Head of caudate nucleus (tissue), 42 donors: ENCODE measurements at regions of chrX and their contacts with region 1.

Region 1: DNA sequence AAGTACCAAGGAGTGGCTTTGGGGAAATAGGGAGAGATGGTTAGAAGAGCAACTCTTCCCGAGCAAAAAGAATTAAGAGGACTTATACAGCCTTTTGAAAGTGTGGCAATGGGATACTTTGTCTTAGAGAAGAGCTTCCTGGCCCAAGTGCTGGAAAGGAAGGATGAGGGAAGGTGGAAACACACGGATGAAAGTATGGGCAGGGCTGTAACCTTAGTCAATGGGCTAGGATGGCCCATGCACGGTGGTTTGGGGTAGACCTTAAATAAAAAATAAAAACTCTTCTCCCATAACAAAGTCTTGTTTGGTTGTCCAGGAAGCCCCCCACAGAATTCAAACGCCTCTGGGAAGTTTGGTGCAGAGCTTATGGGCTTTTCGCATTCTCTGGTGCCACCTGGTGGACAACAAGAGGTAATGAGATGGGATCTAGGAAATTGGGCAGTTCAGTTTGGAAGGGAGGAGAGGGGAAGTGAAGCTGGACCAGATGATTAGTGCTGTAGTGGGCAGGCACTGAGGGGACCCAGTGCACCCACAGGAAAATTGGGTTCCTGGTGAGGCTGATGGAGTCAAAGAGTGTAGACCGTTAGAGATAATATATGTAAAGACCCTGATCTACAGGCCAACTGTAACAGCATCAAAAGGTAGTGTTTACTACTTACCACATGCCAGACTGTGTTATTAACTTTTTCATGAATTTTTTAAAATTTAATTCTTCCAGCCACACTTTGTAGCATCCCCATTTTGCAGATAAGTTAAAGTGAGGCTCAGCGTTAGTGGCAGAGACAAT is 13.8 kb upstream of the ENOX2 start:
- DNase-seq: peak in 39 of 42 donors; percentile 3 to 78 (median 49)

Region 2: GRCh38 chrX:130393451-130394074 is 523.3 kb before region 1 on chrX:
- intact Hi-C with region 1: loop called (anchors 5 kb)
- DNase-seq: peak; percentile 5 to 87 (median 68)

Region 3: DNA sequence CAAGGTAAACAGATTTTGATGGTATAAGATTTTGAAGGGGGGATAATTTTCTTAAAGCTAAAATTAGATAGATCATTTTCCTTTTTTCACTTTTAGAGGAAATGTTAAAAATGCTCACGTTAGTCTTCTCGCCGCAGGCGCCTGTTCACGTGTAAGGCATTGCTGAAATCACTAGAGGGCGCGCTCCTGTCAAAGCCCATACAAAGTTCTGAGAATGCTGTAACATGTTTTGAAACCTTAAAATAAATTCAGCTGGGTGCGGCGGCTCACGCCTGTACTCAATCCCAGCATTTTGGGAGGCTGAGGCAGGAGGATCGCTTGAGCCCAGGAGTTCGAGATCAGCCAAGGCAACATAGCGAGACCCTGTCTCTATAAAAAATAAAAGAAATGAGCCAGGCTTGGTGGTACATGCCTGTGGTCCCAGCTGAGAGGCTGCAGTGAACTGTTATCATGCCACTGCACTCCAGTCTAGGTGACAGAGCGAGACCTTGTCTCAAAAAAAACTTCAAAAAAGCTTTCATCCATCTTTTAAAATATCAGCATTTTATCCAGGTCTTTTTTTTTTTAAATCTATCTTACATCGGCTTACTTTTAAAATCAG is 377.0 kb before region 1 on chrX:
- intact Hi-C with region 1: loop called (anchors 5 kb)
- DNase-seq: peak; percentile 12 to 80 (median 54)